PC-3 (cell line): ENCODE measurements at regions of chr11 and their contacts with region 1.

Region 1: GRCh38 chr11:108115500-108116140 is 5.7 kb upstream of the ACAT1 start:
- DNase-seq: peak; percentile 96
- ATAC-seq: peak; percentile 69
- H3K4me3 ChIP-seq: no peak overlapping the region
- H3K27ac ChIP-seq: peak overlapping the region; percentile 20
- H3K4me1 ChIP-seq: peaks cover 20% of the 10 kb centered on the region
- H3K27me3 ChIP-seq: no peaks in the 10 kb centered on the region
- CTCF ChIP-seq: no peak

Region 2: GRCh38 chr11:108093128-108093904 is 22.3 kb before region 1 on chr11:
- CTCF ChIA-PET with region 1: no interaction called
- POLR2A ChIA-PET with region 1: no interaction called
- intact Hi-C with region 1: loop called (anchors 2 kb)
- DNase-seq: peak; percentile 53
- ATAC-seq: peak; percentile 89
- H3K4me3 ChIP-seq: no peak overlapping the region
- H3K27ac ChIP-seq: peak overlapping the region; percentile 1; the same call in 1 of the 2 replicates
- H3K4me1 ChIP-seq: peaks cover 10% of the 10 kb centered on the region
- H3K27me3 ChIP-seq: no peaks in the 10 kb centered on the region
- CTCF ChIP-seq: no peak